ENCODE measurements at regions of chr15 and their contacts with region 1.

Region 1: GRCh38 chr15:67456677-67457529 is 64.0 kb upstream of the C15orf61 start:
- DNase-seq: peak; percentile 54 to 79 (median 68)
- H3K4me3 ChIP-seq: no peak overlapping the region
- H3K4me3 Mint-ChIP-seq: peak overlapping the region in 1 of 2 donors; percentile 51
- H3K27ac ChIP-seq: no peak overlapping the region
- H3K27ac Mint-ChIP-seq: no peak overlapping the region
- H3K4me1 ChIP-seq: no peaks in the 10 kb centered on the region
- H3K4me1 Mint-ChIP-seq: peaks cover 3% of the 10 kb centered on the region
- H3K27me3 ChIP-seq: no peaks in the 10 kb centered on the region
- H3K27me3 Mint-ChIP-seq: peaks cover 3 to 5% (median 4%) of the 10 kb centered on the region in 3 donors
- CTCF ChIP-seq: peak; percentile 93

Region 2: DNA sequence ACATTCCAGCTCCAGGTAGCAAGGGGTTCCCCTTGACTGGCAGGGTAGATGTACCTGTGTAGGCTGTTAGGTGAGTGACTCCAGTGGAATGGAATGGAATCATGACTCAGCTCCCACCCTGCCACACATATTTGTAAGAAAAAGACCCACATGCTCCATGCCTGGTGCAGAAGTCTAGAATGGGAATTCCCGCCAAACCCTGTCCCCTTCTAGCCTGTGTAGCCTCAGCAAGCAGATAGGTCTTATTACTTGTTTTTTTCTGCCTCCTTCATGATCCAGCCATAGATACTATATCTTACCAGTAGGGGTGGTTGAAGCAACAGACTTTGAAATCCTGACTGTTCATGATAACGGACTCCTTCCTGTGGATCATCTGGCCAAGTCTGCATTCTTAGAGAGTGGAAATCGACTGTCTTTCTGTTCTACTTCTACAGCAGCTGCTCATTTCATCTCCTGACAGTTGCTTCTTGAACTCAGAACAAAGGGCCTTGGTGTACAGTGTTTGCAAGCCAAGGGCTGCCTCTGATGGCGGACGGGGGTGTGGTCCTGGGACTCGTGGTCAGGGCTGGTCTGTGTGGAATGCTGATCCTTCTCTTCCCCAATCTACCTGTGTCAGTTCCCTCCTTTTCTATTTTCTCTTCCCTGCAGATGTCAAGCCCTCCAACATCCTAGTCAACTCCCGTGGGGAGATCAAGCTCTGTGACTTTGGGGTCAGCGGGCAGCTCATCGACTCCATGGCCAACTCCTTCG is 975.6 kb before region 1 on chr15:
- intact Hi-C with region 1: no loop called
- DNase-seq: no peak
- H3K4me3 ChIP-seq: no peak overlapping the region
- H3K4me3 Mint-ChIP-seq: no peak overlapping the region
- H3K27ac ChIP-seq: no peak overlapping the region
- H3K27ac Mint-ChIP-seq: peak overlapping the region in 1 of 7 donors; percentile 34
- H3K4me1 ChIP-seq: peaks cover 12 to 25% of the 10 kb centered on the region in 2 donors
- H3K4me1 Mint-ChIP-seq: peaks cover 38% of the 10 kb centered on the region
- H3K27me3 ChIP-seq: no peaks in the 10 kb centered on the region
- H3K27me3 Mint-ChIP-seq: peaks cover 0 to 2% (median 0%) of the 10 kb centered on the region in 3 donors
- CTCF ChIP-seq: no peak

Region 3: GRCh38 chr15:67242708-67243111 is 214.2 kb before region 1 on chr15:
- intact Hi-C with region 1: no loop called
- DNase-seq: peak in 1 of 3 donors; percentile 13
- H3K4me3 ChIP-seq: no peak overlapping the region
- H3K4me3 Mint-ChIP-seq: peak overlapping the region in 1 of 2 donors; percentile 21
- H3K27ac ChIP-seq: peak overlapping the region in 1 of 2 donors; percentile 37
- H3K27ac Mint-ChIP-seq: peak overlapping the region in 3 of 7 donors; percentile 1 to 56 (median 26)
- H3K4me1 ChIP-seq: peaks cover 16 to 35% of the 10 kb centered on the region in 2 donors
- H3K4me1 Mint-ChIP-seq: peaks cover 36% of the 10 kb centered on the region
- H3K27me3 ChIP-seq: no peaks in the 10 kb centered on the region
- H3K27me3 Mint-ChIP-seq: no peaks in the 10 kb centered on the region
- CTCF ChIP-seq: no peak

Region 4: GRCh38 chr15:67405208-67406191 is 51.4 kb before region 1 on chr15:
- intact Hi-C with region 1: no loop called
- DNase-seq: no peak
- H3K4me3 ChIP-seq: no peak overlapping the region
- H3K4me3 Mint-ChIP-seq: no peak overlapping the region
- H3K27ac ChIP-seq: no peak overlapping the region
- H3K27ac Mint-ChIP-seq: no peak overlapping the region
- H3K4me1 ChIP-seq: no peaks in the 10 kb centered on the region
- H3K4me1 Mint-ChIP-seq: no peaks in the 10 kb centered on the region
- H3K27me3 ChIP-seq: no peaks in the 10 kb centered on the region
- H3K27me3 Mint-ChIP-seq: peaks cover 0 to 1% (median 0%) of the 10 kb centered on the region in 3 donors
- CTCF ChIP-seq: no peak

Region 5: GRCh38 chr15:67833710-67834511 is 377.0 kb after region 1 on chr15:
- intact Hi-C with region 1: loop called (anchors 2 to 5 kb)
- DNase-seq: peak in 1 of 3 donors; percentile 32
- H3K4me3 ChIP-seq: peak overlapping the region in 2 of 3 experiments; percentile 12 to 71
- H3K4me3 Mint-ChIP-seq: peak overlapping the region; percentile 82 to 92
- H3K27ac ChIP-seq: no peak overlapping the region
- H3K27ac Mint-ChIP-seq: peak overlapping the region in 2 of 7 donors; percentile 19 to 30
- H3K4me1 ChIP-seq: peaks cover 49 to 72% of the 10 kb centered on the region in 2 donors
- H3K4me1 Mint-ChIP-seq: peaks cover 69% of the 10 kb centered on the region
- H3K27me3 ChIP-seq: peaks cover 67 to 77% of the 10 kb centered on the region in 2 donors
- H3K27me3 Mint-ChIP-seq: peaks cover 71 to 87% (median 81%) of the 10 kb centered on the region in 3 donors
- CTCF ChIP-seq: peak; percentile 70